ENCODE measurements at regions of chr4 and their contacts with region 1.

Region 1: DNA sequence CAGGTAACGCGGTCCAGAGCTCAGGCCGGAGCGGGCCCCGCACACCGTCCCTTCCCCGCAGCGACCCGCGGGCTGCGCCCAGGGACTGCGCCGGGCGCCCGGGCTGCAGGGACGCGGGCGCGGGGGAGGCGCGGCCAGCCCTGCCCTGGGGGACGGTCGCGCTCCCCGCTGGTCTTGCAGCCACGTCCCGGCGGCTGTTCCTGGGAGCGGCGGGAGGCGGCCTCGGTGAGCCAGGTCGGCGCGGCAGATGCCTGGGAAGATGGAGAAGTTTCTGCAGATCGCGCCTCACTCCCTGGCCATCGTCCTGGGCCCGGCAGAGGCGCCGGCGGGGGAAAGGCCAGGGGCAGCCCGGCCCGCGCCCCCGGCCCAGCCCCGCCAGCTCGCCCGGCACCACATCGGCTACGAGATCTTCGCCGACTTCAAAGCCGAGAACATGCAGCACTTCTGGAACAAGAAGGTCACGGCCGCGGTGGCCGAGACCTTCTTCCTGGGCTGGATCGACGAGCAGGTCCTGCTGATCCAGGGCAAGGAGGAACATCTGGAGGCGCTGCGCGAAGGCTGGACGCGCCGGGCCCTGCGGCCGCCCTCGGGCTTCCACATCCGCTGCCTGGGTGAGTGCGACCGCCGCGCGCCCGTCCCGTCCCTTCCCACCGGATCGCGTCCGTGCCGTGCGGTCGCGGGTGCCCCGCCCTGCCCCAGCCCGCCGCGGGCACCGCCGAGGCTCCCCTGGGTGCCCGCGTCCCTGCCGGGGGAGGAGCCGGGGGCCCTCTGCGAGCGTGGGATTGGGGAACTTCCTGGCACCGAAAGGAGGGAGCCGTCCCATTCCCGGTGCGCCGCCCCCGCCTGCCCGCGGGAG is 107.4 kb upstream of the STOX2 start:
- DNase-seq: peak; percentile 48
- H3K4me3 ChIP-seq: peak overlapping the region; percentile 42 to 60 (median 52)
- H3K27ac ChIP-seq: no peak overlapping the region
- H3K4me1 ChIP-seq: peaks cover 18% of the 10 kb centered on the region
- H3K27me3 ChIP-seq: peaks cover 2% of the 10 kb centered on the region
- CTCF ChIP-seq: no peak

Region 2: GRCh38 chr4:183266386-183266785 is 531.3 kb before region 1 on chr4:
- CTCF ChIA-PET with region 1: no interaction called
- dilution Hi-C with region 1: no loop called
- in situ Hi-C with region 1: no loop called
- intact Hi-C with region 1: no loop called
- DNase-seq: no peak
- H3K4me3 ChIP-seq: no peak overlapping the region
- H3K27ac ChIP-seq: no peak overlapping the region
- H3K4me1 ChIP-seq: no peaks in the 10 kb centered on the region
- H3K27me3 ChIP-seq: no peaks in the 10 kb centered on the region
- CTCF ChIP-seq: no peak

Region 3: DNA sequence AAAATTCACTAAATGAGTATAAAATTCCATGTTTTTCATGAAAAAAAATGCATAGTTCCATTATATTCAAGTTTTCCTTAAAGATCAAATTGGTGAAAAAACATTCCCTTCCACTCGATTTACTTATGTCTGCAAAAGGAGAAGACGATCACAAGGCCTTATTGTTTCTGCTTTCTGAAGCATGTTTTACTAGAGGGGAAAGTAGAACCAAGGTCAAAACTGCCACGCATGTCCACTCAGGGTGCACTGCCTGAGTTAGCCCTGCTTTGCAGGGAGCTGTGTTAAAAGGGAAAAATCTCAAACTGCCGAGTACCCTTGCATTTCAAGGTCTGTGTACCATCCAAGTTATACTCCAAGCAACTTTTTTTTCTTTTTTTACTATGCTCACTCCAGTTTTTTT is 81.4 kb before region 1 on chr4:
- CTCF ChIA-PET with region 1: no interaction called
- dilution Hi-C with region 1: no loop called
- in situ Hi-C with region 1: no loop called
- intact Hi-C with region 1: loop called (anchors 10 kb)
- DNase-seq: no peak
- H3K4me3 ChIP-seq: no peak overlapping the region
- H3K27ac ChIP-seq: no peak overlapping the region
- H3K4me1 ChIP-seq: no peaks in the 10 kb centered on the region
- H3K27me3 ChIP-seq: no peaks in the 10 kb centered on the region
- CTCF ChIP-seq: no peak